HEK293 (cell line): ENCODE measurements at regions of chr11 and their contacts with region 1.

Region 1: DNA sequence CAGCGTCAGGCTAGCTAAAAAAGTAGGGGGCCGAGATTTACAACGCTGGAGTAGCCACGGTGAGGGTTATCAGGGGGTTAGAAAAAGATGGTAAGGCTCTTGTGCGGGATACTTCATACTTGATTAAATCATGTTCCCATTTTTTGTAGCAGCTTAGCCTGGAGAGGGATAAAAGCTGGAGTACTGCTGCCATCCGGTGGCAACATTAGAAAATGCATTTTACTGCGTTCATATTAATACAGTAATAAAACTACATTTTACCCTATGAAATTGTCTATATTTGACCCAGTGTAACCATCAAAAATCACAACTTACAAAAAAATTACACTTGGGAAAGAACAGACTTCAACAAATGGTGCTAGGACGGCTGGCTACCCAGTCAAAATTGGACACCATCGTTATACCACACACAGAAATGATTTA is 17.3 kb downstream of the RPUSD4 start:
- H3K4me3 ChIP-seq: no peak overlapping the region
- H3K27ac ChIP-seq: no peak overlapping the region
- H3K4me1 ChIP-seq: no peaks in the 10 kb centered on the region
- CTCF ChIP-seq: peak; percentile 27; the same call in 1 of the 2 replicates

Region 2: GRCh38 chr11:125923012-125923579 is 271.0 kb before region 1 on chr11:
- CTCF ChIA-PET with region 1: interaction called, 131 read pairs
- POLR2A ChIA-PET with region 1: no interaction called
- H3K4me3 ChIP-seq: no peak overlapping the region
- H3K27ac ChIP-seq: no peak overlapping the region
- H3K4me1 ChIP-seq: no peaks in the 10 kb centered on the region
- CTCF ChIP-seq: peak; percentile 60

Region 3: GRCh38 chr11:125935618-125936199 is 258.4 kb before region 1 on chr11:
- CTCF ChIA-PET with region 1: interaction called, 10 read pairs
- POLR2A ChIA-PET with region 1: no interaction called
- H3K4me3 ChIP-seq: no peak overlapping the region
- H3K27ac ChIP-seq: no peak overlapping the region
- H3K4me1 ChIP-seq: no peaks in the 10 kb centered on the region
- CTCF ChIP-seq: no peak

Region 4: DNA sequence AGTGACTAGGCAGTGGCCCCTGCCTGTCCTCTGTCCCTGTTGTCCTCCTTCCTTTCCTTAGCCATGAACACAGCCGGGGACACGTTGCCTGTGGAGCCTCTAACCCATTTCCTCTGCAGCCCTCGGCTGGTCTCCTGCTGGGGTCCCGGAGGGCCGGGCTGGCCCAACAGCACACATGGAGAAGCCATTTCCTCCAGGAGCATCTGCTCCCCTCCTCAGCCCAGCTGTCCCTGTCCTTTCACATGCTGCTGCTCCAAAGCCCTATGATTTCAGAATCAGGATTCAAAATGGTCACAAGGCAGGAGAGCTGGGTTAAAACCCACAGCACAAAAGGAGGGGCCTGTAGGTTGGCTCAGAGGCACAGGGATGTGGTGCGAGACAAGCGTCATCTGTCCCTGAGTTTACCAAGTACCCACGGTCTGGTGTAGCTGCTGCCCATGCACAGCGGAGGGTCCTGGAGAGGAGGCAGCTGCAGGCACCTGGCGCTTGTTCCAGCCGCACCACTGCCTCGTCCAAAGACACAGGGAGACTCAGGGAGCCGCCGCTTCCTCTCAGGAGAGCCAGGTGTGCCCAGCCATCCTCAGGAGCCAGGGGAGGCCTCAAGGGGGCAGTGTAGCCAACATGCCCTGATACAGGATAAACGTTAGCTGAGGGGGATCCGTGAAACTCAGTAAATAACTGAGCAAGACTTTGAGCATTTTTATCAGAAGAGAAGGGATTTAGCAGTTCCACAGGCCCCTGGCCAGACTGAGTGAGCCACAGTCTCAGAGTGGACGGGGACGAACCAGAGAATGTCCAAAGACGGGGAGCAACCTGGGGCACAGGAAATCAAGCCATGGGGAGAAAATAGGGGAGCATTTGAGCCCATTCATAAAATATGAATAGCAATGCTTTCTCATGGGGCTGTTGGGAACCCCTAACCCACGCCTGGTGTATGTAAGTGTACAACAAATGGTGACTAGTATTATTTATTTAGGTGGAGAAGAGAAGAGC is 252.2 kb before region 1 on chr11:
- CTCF ChIA-PET with region 1: interaction called, 10 read pairs
- POLR2A ChIA-PET with region 1: no interaction called
- H3K4me3 ChIP-seq: no peak overlapping the region
- H3K27ac ChIP-seq: no peak overlapping the region
- H3K4me1 ChIP-seq: no peaks in the 10 kb centered on the region
- CTCF ChIP-seq: peak; percentile 32; the same call in 1 of the 2 replicates

Region 5: DNA sequence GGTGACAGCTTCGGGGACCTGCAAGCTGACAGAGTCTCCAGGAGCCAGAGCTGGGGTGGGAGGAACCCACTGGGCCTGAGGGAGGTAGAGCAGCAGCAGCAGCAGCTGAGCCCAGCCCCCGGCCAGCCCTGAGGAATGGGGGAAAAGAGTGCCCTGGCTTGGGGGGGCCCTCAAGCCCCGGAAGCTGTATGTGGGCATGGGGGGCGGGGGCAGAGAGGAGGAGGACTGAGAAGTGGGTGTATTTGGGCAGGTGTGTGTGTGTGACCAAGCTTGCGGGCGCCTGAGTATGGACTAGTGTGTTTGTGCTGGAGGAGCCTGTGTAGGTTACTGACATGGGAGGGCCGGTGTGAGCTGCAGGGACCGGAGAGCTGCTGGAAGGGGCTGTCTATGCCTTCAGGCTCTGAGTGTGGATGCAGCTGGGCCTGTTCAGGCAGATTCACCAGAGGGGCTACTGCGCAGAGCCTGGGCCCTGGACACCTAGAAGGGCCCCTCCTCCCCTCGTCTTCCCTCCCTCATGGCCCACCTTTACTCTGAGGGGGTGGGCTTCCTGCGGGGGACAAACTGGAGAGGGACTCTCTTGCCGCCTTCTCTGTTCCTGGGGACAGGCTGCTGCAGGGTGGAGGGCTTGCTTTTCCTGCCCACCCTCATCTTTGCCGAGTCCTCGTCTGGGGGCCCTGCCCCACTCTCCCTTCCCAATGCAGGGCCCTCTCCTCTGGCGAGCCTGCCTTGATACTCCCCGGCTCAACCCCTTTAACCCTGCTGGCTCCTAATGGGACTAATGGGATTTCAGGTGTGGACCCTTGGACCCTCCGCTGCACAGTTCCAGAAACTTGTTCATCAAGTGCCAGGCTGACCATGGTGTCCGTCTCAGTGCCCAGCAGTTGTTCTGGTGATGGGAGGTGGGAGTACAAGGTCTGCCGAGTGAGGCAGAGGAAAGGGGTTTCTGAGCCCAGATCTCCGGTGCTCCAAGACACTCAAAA is 189.5 kb after region 1 on chr11:
- CTCF ChIA-PET with region 1: no interaction called
- POLR2A ChIA-PET with region 1: no interaction called
- H3K4me3 ChIP-seq: no peak overlapping the region
- H3K27ac ChIP-seq: no peak overlapping the region
- H3K4me1 ChIP-seq: no peaks in the 10 kb centered on the region
- CTCF ChIP-seq: no peak